MCF 10A (cell line): ENCODE measurements at regions of chr6 and their contacts with region 1.

Region 1: DNA sequence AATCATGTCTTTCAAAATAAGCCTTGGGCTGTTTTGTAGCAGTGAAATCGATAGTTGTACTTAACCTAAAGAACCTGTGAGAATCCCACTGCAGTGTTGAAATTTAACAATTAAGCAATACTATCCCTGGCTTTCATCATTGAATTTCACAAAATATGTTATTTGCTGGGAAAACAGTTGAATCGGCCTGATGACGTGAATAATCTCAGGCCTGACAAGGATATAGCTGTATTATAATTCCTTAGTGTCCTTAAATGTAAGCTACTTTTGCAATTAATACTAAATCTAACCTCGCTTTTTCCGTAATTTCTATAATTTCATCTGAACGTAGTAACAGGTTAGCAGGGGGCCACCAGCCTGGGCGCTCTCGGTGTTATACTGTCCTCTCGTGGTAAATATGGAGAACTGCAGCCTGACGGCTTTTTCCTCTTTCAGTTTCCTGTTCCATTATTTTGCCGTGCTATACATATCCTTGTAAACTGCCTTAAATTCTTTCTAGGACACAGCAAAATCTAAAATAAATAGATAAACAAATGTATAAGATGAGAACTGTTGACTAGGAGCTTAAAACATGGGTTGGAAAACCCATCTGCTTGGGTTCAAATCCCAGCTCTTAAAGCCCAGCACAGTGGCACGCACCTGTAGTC is 24.0 kb downstream of the MTFR2 start:
- DNase-seq: peak; percentile 75
- H3K4me3 Mint-ChIP-seq: no peak overlapping the region
- H3K27ac Mint-ChIP-seq: peak overlapping the region; percentile 41
- H3K4me1 Mint-ChIP-seq: peaks cover 9% of the 10 kb centered on the region
- H3K27me3 Mint-ChIP-seq: no peaks in the 10 kb centered on the region
- CTCF ChIP-seq: peak; percentile 99

Region 2: GRCh38 chr6:135451693-135452092 is 774.5 kb before region 1 on chr6:
- CTCF ChIA-PET with region 1: interaction called, 42 read pairs
- POLR2A ChIA-PET with region 1: no interaction called
- intact Hi-C with region 1: loop called (anchors 1 kb)
- DNase-seq: peak; percentile 57
- H3K4me3 Mint-ChIP-seq: no peak overlapping the region
- H3K27ac Mint-ChIP-seq: no peak overlapping the region
- H3K4me1 Mint-ChIP-seq: no peaks in the 10 kb centered on the region
- H3K27me3 Mint-ChIP-seq: no peaks in the 10 kb centered on the region
- CTCF ChIP-seq: peak; percentile 61

Region 3: DNA sequence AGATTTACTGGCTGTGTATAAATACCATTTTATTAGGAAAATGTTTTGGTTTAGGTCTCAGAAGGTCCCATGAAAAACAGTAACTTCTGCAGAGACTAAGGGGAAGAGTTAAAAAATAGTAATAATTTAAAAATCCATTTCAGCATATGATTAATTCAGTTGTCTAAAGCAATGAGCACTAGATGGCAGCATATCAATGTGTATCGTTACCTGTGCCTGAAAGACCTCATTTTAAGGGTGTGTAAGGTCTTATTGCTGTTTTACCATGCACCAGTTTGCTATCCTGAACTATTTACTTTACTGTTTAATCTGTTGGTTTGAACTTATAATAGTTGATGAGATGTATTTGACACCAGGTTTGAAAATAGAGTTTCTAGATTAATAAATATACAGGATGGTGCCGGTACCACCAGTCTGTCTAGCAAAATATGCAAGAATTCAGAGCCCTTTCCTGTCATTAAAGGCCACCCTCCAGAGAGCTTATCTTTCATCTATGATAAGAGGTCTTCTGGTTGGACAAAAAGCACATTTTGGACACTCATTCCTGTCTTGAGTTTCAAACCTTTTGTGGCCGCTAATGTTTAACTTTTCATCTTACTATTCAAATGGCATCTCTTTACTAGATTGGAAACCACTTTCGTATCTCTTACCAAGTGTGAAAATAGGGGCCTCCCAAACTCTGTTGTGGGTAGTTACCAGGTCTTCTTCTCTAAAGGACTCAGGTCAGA is 719.7 kb before region 1 on chr6:
- CTCF ChIA-PET with region 1: interaction called, 32 read pairs
- POLR2A ChIA-PET with region 1: interaction called, 4 read pairs
- intact Hi-C with region 1: loop called (anchors 1 kb)
- DNase-seq: peak; percentile 66
- H3K4me3 Mint-ChIP-seq: no peak overlapping the region
- H3K27ac Mint-ChIP-seq: no peak overlapping the region
- H3K4me1 Mint-ChIP-seq: no peaks in the 10 kb centered on the region
- H3K27me3 Mint-ChIP-seq: no peaks in the 10 kb centered on the region
- CTCF ChIP-seq: peak; percentile 43

Region 4: GRCh38 chr6:135527116-135527959 is 698.8 kb before region 1 on chr6:
- CTCF ChIA-PET with region 1: interaction called, 15 read pairs
- POLR2A ChIA-PET with region 1: no interaction called
- intact Hi-C with region 1: no loop called
- DNase-seq: no peak
- H3K4me3 Mint-ChIP-seq: no peak overlapping the region
- H3K27ac Mint-ChIP-seq: no peak overlapping the region
- H3K4me1 Mint-ChIP-seq: peaks cover 9% of the 10 kb centered on the region
- H3K27me3 Mint-ChIP-seq: no peaks in the 10 kb centered on the region
- CTCF ChIP-seq: no peak

Region 5: DNA sequence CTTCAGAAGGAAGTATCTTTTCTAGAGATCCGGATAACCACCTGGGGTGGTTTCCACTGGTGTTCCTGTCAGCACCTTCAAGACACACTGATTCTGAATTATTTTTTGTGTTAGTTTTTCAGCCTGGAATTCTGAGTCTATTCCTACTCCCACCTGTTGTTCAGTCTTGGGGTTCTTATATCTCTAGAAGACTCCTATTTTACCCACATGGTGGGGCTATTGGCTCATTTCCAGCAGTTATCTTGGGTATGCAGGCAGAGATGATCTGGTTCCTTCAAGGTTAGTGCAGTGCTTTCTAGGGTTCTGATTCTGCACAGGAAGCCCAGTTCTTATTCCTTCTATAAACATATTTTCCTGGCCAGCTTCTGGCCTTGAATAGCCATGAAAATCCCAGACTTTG is 550.3 kb before region 1 on chr6:
- CTCF ChIA-PET with region 1: interaction called, 9 read pairs
- POLR2A ChIA-PET with region 1: no interaction called
- intact Hi-C with region 1: loop called (anchors 1 kb)
- DNase-seq: peak; percentile 57
- H3K4me3 Mint-ChIP-seq: no peak overlapping the region
- H3K27ac Mint-ChIP-seq: no peak overlapping the region
- H3K4me1 Mint-ChIP-seq: no peaks in the 10 kb centered on the region
- H3K27me3 Mint-ChIP-seq: no peaks in the 10 kb centered on the region
- CTCF ChIP-seq: no peak

Region 6: GRCh38 chr6:136031982-136032381 is 194.2 kb before region 1 on chr6:
- CTCF ChIA-PET with region 1: interaction called, 4 read pairs
- POLR2A ChIA-PET with region 1: no interaction called
- intact Hi-C with region 1: loop called (anchors 1 kb)
- DNase-seq: peak; percentile 53
- H3K4me3 Mint-ChIP-seq: no peak overlapping the region
- H3K27ac Mint-ChIP-seq: no peak overlapping the region
- H3K4me1 Mint-ChIP-seq: no peaks in the 10 kb centered on the region
- H3K27me3 Mint-ChIP-seq: no peaks in the 10 kb centered on the region
- CTCF ChIP-seq: peak; percentile 14

Region 7: GRCh38 chr6:136317021-136317694 is 91.0 kb after region 1 on chr6:
- CTCF ChIA-PET with region 1: interaction called, 13 read pairs
- POLR2A ChIA-PET with region 1: no interaction called
- intact Hi-C with region 1: no loop called
- DNase-seq: peak; percentile 79
- H3K4me3 Mint-ChIP-seq: no peak overlapping the region
- H3K27ac Mint-ChIP-seq: no peak overlapping the region
- H3K4me1 Mint-ChIP-seq: no peaks in the 10 kb centered on the region
- H3K27me3 Mint-ChIP-seq: no peaks in the 10 kb centered on the region
- CTCF ChIP-seq: peak; percentile 63